ENCODE measurements at regions of chr11 and their contacts with region 1.

Region 1: GRCh38 chr11:113305440-113306336 is 8.7 kb upstream of the TTC12 start:
- DNase-seq: peak; percentile 55
- H3K4me3 Mint-ChIP-seq: no peak overlapping the region
- H3K27ac Mint-ChIP-seq: no peak overlapping the region
- H3K4me1 Mint-ChIP-seq: peaks cover 2% of the 10 kb centered on the region
- H3K27me3 Mint-ChIP-seq: peaks cover 7% of the 10 kb centered on the region

Region 2: GRCh38 chr11:113532697-113533424 is 227.2 kb after region 1 on chr11:
- intact Hi-C with region 1: loop called (anchors 1 kb)
- DNase-seq: peak; percentile 27
- H3K4me3 Mint-ChIP-seq: no peak overlapping the region
- H3K27ac Mint-ChIP-seq: no peak overlapping the region
- H3K4me1 Mint-ChIP-seq: no peaks in the 10 kb centered on the region
- H3K27me3 Mint-ChIP-seq: peaks cover 28% of the 10 kb centered on the region

Region 3: GRCh38 chr11:113730887-113731726 is 425.4 kb after region 1 on chr11:
- intact Hi-C with region 1: loop called (anchors 1 kb)
- DNase-seq: no peak
- H3K4me3 Mint-ChIP-seq: no peak overlapping the region
- H3K27ac Mint-ChIP-seq: no peak overlapping the region
- H3K4me1 Mint-ChIP-seq: peaks cover under 1% of the 10 kb centered on the region
- H3K27me3 Mint-ChIP-seq: no peaks in the 10 kb centered on the region

Region 4: GRCh38 chr11:113796663-113797259 is 491.1 kb after region 1 on chr11:
- intact Hi-C with region 1: loop called (anchors 1 kb)
- DNase-seq: no peak
- H3K4me3 Mint-ChIP-seq: no peak overlapping the region
- H3K27ac Mint-ChIP-seq: no peak overlapping the region
- H3K4me1 Mint-ChIP-seq: no peaks in the 10 kb centered on the region
- H3K27me3 Mint-ChIP-seq: no peaks in the 10 kb centered on the region

Measured in activated T-helper 2 cell treated with anti-CD3 and anti-CD28 coated beads, Interferon-gamma antibody, Interleukin-2, Interleukin-4, amounts not matched to agents 10 μg/mL and 5 μg/mL and 100 μg/mL, durations not matched to agents 14 hours and 24 hours and 36 hours (primary cell).